Posterior cingulate gyrus (tissue), 11 donors: ENCODE measurements at regions of chr5 and their contacts with region 1.

Region 1: GRCh38 chr5:116574367-116575325 is at the start of gene SEMA6A:
- DNase-seq: peak; percentile 87 to 99 (median 92)

Region 2: GRCh38 chr5:116068028-116068632 is 506.5 kb before region 1 on chr5:
- intact Hi-C with region 1: no loop called
- DNase-seq: peak in 1 of 10 donors; percentile 22

Region 3: GRCh38 chr5:116137544-116138378 is 436.9 kb before region 1 on chr5:
- intact Hi-C with region 1: loop called (anchors 5 kb)
- DNase-seq: no peak

Region 4: GRCh38 chr5:116361171-116361967 is 213.3 kb before region 1 on chr5:
- intact Hi-C with region 1: loop called (anchors 5 kb)
- DNase-seq: peak; percentile 61 to 96 (median 76)

Region 5: GRCh38 chr5:116622375-116623050 is 47.9 kb after region 1 on chr5:
- intact Hi-C with region 1: loop called (anchors 5 kb)
- DNase-seq: peak in 5 of 10 donors; percentile 16 to 84 (median 53)

Region 6: GRCh38 chr5:116652196-116652729 is 77.6 kb after region 1 on chr5:
- intact Hi-C with region 1: loop called (anchors 10 kb)
- DNase-seq: peak; percentile 37 to 96 (median 74)

Region 7: DNA sequence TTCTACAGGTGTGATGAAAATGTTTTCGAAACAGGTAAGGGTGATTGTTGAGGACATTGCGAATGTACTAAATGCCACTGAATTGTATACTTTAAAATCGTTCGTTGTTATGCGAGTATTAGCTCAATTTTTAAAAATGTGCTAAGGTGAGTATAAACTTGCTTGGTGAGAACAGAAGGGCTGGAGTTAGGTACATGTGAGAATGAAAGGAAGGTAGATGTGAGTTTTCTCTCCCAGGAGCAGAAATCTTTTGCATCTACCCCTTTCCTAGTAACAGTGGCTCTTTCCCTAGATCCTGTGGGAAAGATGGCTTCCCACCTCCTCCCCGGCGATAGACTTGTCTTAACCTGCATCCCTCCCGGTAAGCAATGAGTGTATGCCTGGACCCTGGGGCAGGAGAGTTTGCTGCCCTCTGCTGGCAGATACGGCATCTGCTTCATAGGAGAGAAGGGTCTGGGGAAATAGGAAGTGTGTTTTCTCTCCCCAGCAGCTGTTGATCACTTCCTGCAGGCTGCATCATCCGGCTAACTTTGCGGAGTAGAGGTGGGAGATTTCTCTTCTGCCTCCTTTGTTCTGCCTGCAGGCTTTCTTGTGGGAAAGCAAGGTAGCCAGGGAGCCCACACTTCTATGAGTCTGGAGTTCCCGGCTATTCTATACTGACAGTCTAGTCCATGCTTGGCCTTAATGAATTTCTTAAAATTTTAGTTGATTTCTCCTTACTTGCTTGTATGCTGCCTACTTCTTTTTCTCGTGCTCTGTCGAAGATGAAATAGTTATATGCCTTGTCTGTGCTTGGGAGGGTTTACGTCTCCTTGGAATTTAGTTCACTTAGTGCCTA is 373.3 kb after region 1 on chr5:
- intact Hi-C with region 1: loop called (anchors 5 kb)
- DNase-seq: peak in 7 of 10 donors; percentile 11 to 87 (median 56)

Region 8: GRCh38 chr5:117161718-117162335 is 587.2 kb after region 1 on chr5:
- intact Hi-C with region 1: loop called (anchors 10 kb)
- DNase-seq: no peak